Posterior vena cava (tissue), 2 donors: ENCODE measurements at regions of chr16 and their contacts with region 1.

Region 1: GRCh38 chr16:28897826-28898225 is 19.5 kb downstream of the ATP2A1 start:
- DNase-seq: no peak

Region 2: DNA sequence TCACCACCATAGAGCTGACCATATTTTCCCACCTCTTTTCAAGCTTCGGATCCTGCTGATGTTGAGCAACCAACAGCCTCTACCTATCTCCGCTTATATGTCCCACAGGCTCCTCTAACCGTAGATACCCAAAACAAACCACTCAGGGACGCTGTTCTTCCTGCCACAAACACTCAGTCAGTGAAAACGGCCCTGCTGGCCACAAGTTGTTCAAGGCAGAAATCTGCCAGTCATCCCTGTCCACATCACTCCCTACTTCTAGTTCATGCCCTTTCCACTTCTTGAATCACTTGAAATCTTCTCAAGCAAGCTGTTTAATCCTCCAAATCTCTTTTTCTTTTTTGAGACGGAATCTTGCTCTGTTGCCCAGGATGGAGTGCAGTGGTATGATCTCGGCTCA is 19.3 kb after region 1 on chr16:
- intact Hi-C with region 1: loop called in 1 of 2 experiments (anchors 1 kb)
- DNase-seq: no peak

Region 3: DNA sequence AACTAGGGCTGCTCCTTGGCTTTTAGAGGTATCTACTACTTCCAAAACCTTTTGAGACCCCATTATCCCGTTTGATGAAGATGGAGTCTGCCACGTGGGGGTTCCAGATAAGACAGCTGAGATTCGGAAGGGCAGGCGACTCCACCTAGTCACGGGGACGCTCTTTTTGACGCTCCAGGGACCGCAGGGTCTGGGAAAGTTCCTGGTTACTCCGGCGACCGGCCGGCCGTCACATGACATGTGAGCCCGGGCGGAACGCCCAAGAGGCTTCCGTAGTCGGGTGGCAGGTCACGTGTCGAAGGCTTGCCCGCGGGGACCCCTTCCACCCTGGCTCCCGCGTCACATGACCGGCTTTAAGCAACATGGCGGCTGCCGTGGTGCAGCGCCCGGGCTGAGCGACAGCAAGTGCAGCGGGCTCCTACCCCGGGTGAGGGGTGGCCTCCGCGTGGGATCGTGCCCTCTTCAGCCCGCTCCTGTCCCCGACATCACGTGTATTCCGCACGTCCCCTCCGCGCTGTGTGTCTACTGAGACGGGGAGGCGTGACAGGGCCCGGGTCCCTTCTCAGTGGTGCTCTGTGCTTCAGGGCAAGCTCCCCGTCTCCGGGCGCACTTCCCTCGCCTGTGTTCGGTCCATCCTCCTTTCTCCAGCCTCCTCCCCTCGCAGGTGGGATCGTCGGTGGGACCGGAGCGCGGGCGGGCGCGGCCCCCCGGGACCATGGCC is 76.8 kb after region 1 on chr16 and contains the start of gene SPNS1:
- intact Hi-C with region 1: no loop called
- DNase-seq: peak; percentile 100
- total RNA-seq, gene SPNS1: 22.4 to 24.9 TPM